Activated CD8-positive, alpha-beta memory T cell treated with anti-CD3 and anti-CD28 coated beads, Interleukin-2, amount 10 ng/mL, durations not matched to agents 7 days and 5 days (primary cell): ENCODE measurements at regions of chrX and their contacts with region 1.

Region 1: DNA sequence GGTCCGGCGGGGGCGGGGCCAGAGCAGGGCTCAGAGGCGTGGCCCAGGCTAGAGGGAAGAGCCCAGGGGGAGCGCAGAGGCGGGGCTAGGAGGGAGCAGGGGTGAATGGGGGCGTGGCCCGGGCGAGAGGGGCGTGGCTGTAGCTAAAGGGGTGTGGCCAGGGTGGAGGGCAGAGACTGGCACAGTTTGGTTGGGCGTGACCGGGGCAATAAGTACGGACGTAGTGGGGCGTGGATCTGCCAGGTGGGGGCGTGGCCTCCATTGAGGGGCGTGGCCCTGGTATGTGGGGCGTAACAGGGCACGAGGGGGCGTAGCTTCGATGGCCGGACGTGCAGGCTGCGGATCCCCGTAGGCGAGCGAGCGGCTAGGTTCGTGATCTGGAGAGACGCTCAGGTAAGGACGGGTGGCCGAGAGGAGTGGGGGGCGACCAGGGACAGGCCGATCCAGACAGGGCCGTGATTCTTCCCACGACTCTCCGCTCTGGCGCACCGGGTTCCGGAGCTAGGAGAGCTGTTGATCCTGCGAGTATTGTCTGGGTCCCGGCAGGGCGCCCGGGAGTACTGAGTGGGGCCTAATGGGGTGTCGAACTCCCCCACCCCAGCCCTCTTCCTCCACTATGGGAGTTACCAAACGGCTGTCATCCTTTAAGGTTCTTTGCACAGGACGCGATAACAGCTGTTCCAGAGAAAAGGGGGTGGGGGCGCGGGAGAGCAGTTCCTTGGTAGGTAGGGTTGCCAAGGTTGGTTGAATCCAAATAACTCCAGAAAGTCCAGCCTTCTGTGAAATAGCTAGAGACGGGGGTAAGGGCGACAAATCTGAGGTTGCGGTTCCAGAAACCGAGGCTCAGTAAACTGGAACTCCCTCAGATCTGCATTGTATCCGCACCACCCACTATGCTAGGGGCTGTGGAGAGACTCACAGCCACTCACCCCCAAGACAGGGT is at the start of gene CA5B:
- DNase-seq: peak; percentile 97
- ATAC-seq: peak; percentile 97
- H3K4me3 Mint-ChIP-seq: peak within 1 kb of the TSS; percentile 81
- H3K27ac Mint-ChIP-seq: peak within 1 kb of the TSS; percentile 82
- H3K4me1 Mint-ChIP-seq: peaks cover 22% of the 10 kb centered on the region
- H3K27me3 Mint-ChIP-seq: no peaks in the 10 kb centered on the region
- total RNA-seq, gene CA5B: 7.8 to 12.7 TPM

Region 2: GRCh38 chrX:15718283-15718970 is 19.8 kb before region 1 on chrX:
- CTCF ChIA-PET with region 1: no interaction called
- DNase-seq: no peak
- ATAC-seq: no peak
- H3K4me3 Mint-ChIP-seq: no peak overlapping the region
- H3K27ac Mint-ChIP-seq: no peak overlapping the region
- H3K4me1 Mint-ChIP-seq: peaks cover 5% of the 10 kb centered on the region
- H3K27me3 Mint-ChIP-seq: no peaks in the 10 kb centered on the region

Region 3: GRCh38 chrX:15748841-15749240 is 10.6 kb after region 1 on chrX:
- CTCF ChIA-PET with region 1: interaction called, 10 read pairs
- DNase-seq: no peak
- ATAC-seq: no peak
- H3K4me3 Mint-ChIP-seq: no peak overlapping the region
- H3K27ac Mint-ChIP-seq: peak overlapping the region; percentile 97
- H3K4me1 Mint-ChIP-seq: peaks cover 41% of the 10 kb centered on the region
- H3K27me3 Mint-ChIP-seq: no peaks in the 10 kb centered on the region